Mammary epithelial cell (primary cell): ENCODE measurements at regions of chr7 and their contacts with region 1.

Region 1: GRCh38 chr7:106679153-106679931 is 18.4 kb upstream of the CCDC71L start:
- DNase-seq: peak; percentile 79
- H3K4me3 ChIP-seq: no peak overlapping the region
- H3K27ac ChIP-seq: peak overlapping the region; percentile 9
- H3K4me1 ChIP-seq: peaks cover 17% of the 10 kb centered on the region
- H3K27me3 ChIP-seq: no peaks in the 10 kb centered on the region
- CTCF ChIP-seq: no peak

Region 2: DNA sequence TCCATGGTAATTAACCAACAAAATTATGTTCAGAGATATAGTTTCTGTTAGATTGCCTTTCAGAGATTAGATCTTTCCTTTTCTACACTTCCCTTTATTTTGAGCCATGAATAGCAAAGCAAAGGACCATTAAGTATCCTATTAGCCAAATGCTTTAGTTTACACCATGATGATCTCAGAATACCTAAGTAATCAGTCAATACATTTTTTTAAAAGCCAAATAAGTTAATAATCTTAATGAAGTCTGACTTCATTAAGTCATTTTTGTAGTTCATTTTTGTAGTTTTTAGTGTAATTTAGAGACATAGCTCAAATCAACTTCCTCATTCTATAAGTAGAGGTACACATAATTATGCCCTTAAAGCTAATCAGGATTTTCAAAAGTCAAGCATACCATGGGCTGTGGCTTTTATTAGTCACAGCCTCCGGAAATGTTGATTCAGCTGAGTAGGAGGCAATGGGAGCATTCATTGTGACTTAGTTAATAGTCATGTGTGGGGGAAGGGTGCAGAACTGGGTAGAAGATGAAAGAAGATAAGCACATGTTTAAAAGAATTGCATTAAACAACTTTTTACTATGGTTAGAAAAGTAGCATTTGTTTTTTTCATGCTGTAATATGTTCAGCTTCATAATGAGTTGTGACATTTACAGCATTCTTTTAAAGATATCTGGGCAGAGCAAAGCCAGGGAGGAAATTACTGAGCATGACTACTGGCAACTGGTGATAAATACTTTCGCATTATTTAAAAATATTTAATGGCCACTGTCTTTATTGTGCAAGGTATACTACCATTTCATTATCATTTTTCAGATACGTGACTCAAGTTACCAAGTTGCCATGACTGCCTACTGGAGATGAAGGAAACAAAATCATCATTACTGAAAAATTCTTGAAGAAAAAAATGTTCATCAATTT is 38.9 kb after region 1 on chr7:
- CTCF ChIA-PET with region 1: no interaction called
- dilution Hi-C with region 1: no loop called
- in situ Hi-C with region 1: no loop called
- intact Hi-C with region 1: loop called (anchors 5 kb)
- DNase-seq: peak; percentile 95
- H3K4me3 ChIP-seq: no peak overlapping the region
- H3K27ac ChIP-seq: peak overlapping the region; percentile 98
- H3K4me1 ChIP-seq: peaks cover 23% of the 10 kb centered on the region
- H3K27me3 ChIP-seq: no peaks in the 10 kb centered on the region
- CTCF ChIP-seq: no peak